HepG2 (cell line): ENCODE measurements at regions of chr4 and their contacts with region 1.

Region 1: DNA sequence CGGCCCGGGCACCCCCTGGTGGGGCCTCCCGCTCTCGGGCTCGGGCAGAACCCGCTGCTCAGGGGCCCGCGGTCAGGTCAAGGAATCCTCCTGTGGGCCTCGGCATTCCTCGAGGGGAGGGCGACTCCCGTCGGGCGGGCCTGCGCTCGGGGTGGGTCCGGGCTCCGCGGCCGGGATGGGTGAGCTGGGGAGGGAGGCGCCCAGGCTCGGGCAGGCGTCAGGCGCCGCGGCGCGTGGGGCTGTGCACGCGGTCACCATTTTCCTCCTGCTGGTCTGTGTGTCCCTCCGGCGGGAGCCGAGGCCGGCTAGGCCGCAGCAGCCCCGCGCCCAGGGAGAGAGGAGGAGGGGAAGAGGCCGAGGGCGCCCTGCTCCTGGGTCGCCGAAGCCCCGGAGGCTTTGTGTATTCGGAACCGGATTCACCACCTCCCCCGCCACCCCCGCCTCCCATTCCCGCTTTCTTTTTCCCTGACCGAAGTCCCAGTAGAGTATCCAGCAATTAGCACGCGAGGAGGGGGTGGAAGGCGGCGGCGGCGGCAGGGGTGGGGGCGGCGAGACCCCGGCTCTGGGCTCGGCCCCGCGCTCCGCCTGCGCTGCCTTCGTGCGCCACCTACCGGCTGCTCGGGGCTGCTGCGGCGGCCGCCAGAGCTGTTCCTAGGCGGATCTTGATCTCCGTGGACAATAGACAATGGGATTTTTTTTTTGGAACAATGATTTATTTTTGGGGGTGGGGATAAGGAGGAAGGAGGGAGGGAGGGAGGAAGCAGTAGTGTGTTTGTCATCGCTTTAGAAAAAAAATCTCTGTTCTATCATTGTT is 99.0 kb upstream of the MAML3 start:
- DNase-seq: no peak
- ATAC-seq: peak; percentile 90
- H3K4me3 ChIP-seq: peak overlapping the region; percentile 38 to 67 (median 50); a peak in 5 of 6 replicates
- H3K27ac ChIP-seq: no peak overlapping the region
- H3K4me1 ChIP-seq: peaks cover 43% of the 10 kb centered on the region
- H3K27me3 ChIP-seq: peaks cover 2 to 8% of the 10 kb centered on the region in 2 experiments; a peak in 2 of 5 replicates
- CTCF ChIP-seq: peak; percentile 76
- EP300 ChIP-seq: no peak
- POLR2A ChIP-seq: no peak
- RAD21 ChIP-seq: peak; percentile 66

Region 2: GRCh38 chr4:140052050-140052449 is 200.9 kb before region 1 on chr4:
- CTCF ChIA-PET with region 1: interaction called, 5 read pairs
- POLR2A ChIA-PET with region 1: no interaction called
- in situ Hi-C with region 1: no loop called
- intact Hi-C with region 1: loop called (anchors 2 kb)
- DNase-seq: peak; percentile 10
- ATAC-seq: peak; percentile 59
- H3K4me3 ChIP-seq: no peak overlapping the region
- H3K27ac ChIP-seq: no peak overlapping the region
- H3K4me1 ChIP-seq: peaks cover 20% of the 10 kb centered on the region
- H3K27me3 ChIP-seq: peaks cover 0 to 6% of the 10 kb centered on the region in 2 experiments; a peak in 1 of 5 replicates
- CTCF ChIP-seq: peak; percentile 38
- EP300 ChIP-seq: no peak
- POLR2A ChIP-seq: no peak
- RAD21 ChIP-seq: no peak

Region 3: DNA sequence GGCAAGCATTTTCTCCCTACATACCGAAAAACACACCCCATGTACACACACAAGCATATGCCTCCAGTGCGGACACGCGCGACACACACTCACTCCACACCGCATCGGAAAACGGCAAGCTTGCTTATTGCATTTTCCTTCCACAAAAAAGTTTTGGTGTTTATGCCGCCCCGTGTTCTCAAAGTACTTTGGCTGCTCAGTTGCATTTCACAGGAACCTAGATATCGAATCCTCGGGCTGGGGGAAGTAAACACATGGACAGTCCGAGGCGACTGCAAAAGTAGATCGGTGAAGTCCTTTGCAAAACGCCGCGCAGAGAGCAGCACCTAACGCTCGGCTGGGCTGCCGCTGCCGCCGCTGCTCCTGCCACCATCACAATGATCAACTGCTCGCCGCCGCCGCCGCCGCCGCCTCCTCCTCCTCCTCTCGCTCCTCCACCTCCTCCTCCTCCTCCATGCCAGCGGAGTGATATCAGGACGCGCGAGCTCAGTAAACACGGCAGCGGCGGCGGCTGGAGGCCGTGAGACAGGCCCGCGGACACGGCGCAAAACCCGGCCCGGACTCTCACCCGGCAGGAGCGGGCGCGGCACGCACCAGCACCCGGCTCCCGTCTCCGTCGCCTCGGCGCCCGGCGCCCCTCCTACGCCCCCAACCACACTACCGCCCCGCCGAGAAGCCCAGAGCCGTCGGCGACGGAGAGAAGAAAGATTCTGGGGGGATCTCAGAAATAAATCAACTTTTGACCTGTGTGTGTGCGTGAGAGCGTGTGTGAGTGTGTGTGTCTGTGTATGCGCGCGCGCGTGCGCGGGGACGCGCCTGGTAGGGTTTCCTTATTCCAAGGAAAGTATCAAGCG is 99.0 kb before region 1 on chr4 and contains the start of gene MAML3:
- CTCF ChIA-PET with region 1: no interaction called
- POLR2A ChIA-PET with region 1: no interaction called
- in situ Hi-C with region 1: loop called (anchors 5 kb)
- intact Hi-C with region 1: loop called (anchors 1 kb)
- DNase-seq: peak; percentile 64
- ATAC-seq: peak; percentile 83
- H3K4me3 ChIP-seq: peak within 1 kb of the TSS; percentile 55 to 75 (median 65)
- H3K27ac ChIP-seq: no peak within 1 kb of the TSS
- H3K4me1 ChIP-seq: peaks cover 42% of the 10 kb centered on the region
- H3K27me3 ChIP-seq: peaks cover 3 to 48% of the 10 kb centered on the region in 2 experiments
- CTCF ChIP-seq: no peak
- EP300 ChIP-seq: no peak
- POLR2A ChIP-seq: no peak
- RAD21 ChIP-seq: 0 out of 2 replicates have a peak, but pooled peaks have one; percentile 33
- total RNA-seq, gene MAML3: 0.13 TPM in 1 of 2 replicates, not detected in the other